A673 (cell line): ENCODE measurements at regions of chr22 and their contacts with region 1.

Region 1: DNA sequence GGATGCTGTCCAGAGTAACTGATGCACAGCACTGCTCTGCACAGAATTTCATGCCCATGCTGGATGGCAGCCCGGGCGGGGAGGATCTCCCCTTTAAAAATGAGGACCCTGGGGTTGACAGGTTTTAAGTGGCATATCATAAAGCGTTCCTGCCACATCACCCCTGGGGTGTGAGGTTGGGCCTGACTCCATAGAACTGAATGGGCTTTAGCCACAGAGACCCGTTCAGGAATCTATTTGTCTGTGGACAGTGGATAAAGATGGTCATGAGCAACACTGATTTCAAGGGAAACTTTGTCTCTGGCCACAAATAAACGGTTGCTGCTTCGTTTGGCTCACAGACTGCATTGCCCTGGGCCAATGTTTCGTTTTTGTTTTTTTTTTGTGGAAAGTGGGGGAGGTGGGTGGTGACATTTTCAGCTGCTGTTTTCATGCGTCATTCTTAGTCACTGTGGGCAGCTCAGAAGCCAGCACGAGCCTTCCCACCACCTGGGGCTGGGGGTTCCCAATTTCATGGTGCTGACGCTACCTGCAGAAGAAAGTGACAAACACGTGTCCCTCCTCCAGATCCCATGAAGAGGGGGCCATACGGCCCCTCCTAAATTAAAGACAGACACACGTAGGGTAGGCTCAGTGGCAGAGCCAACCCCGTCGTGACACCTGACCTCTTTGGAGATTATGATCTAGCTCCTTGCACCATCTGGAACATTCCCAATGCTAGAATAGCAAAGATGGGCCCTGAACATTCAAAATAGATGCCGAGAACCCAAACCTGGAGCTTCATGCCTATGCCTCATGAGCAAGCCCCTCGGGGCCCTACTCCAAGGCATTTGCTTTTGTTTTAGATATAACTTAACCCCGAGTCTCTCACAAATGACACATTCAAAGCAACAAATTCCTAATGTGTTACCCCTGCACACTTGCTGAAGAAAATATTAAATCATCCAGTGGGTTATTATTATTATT is 54.8 kb upstream of the PHF21B start:
- DNase-seq: no peak
- H3K4me3 ChIP-seq: no peak overlapping the region
- H3K27ac ChIP-seq: no peak overlapping the region
- H3K4me1 ChIP-seq: no peaks in the 10 kb centered on the region
- H3K27me3 ChIP-seq: no peaks in the 10 kb centered on the region
- CTCF ChIP-seq: no peak

Region 2: DNA sequence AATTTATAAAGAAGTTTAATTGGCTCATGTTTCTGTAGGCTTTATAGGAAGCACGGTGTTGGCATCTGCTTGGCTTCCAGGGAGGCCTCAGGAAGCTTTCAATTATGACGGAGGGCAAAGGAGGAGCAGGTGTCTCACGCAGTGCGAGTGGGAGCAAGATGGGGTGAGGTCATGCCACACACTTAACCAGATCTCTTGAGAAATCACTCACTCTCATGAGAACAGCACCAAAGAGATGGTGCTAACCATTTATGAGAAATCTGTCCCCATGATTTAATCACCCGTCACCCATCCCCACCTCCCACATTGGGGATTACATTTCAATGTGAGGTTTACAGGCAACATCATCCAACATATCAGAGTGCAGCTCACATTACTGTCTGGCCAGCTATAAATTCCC is 208.7 kb before region 1 on chr22:
- CTCF ChIA-PET with region 1: interaction called, 10 read pairs
- POLR2A ChIA-PET with region 1: no interaction called
- intact Hi-C with region 1: no loop called
- DNase-seq: no peak
- H3K4me3 ChIP-seq: no peak overlapping the region
- H3K27ac ChIP-seq: no peak overlapping the region
- H3K4me1 ChIP-seq: no peaks in the 10 kb centered on the region
- H3K27me3 ChIP-seq: no peaks in the 10 kb centered on the region
- CTCF ChIP-seq: no peak